HEK293 (cell line): ENCODE measurements at regions of chr14 and their contacts with region 1.

Region 1: GRCh38 chr14:21917699-21918436 is 244.2 kb upstream of the OR4E1 start:
- H3K4me3 ChIP-seq: no peak overlapping the region
- H3K27ac ChIP-seq: no peak overlapping the region
- H3K4me1 ChIP-seq: no peaks in the 10 kb centered on the region
- CTCF ChIP-seq: peak; percentile 52; the same call in 1 of the 2 replicates

Region 2: GRCh38 chr14:21711360-21711961 is 206.4 kb before region 1 on chr14:
- CTCF ChIA-PET with region 1: no interaction called
- POLR2A ChIA-PET with region 1: no interaction called
- H3K4me3 ChIP-seq: no peak overlapping the region
- H3K27ac ChIP-seq: no peak overlapping the region
- H3K4me1 ChIP-seq: no peaks in the 10 kb centered on the region
- CTCF ChIP-seq: no peak

Region 3: DNA sequence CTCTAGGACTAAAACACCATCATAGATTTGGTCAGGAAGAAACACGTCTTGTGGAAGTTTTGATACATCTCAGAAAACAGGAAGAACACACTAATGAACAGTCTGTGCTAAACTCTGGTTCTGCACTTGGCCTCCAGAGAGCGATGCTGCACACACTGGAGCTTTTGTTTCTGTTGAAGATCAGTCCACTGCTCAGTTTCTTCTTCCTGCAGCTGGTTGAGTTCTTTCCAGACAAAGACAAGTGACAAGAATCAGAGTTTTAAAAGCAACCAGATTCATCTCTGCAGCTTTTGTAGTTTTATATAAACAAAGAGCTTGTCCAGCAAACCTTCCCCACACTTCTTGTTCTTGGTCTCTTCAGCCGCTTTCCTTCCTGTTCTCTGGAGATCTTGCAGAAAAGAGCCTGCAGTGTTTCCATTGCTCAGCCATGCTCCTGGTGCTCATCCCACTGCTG is 15.2 kb before region 1 on chr14:
- CTCF ChIA-PET with region 1: interaction called, 28 read pairs
- POLR2A ChIA-PET with region 1: no interaction called
- H3K4me3 ChIP-seq: no peak overlapping the region
- H3K27ac ChIP-seq: no peak overlapping the region
- H3K4me1 ChIP-seq: no peaks in the 10 kb centered on the region
- CTCF ChIP-seq: no peak

Region 4: GRCh38 chr14:21933681-21934080 is 15.8 kb after region 1 on chr14:
- CTCF ChIA-PET with region 1: interaction called, 18 read pairs
- POLR2A ChIA-PET with region 1: no interaction called
- H3K4me3 ChIP-seq: no peak overlapping the region
- H3K27ac ChIP-seq: no peak overlapping the region
- H3K4me1 ChIP-seq: no peaks in the 10 kb centered on the region
- CTCF ChIP-seq: no peak

Region 5: GRCh38 chr14:21940887-21941856 is 23.3 kb after region 1 on chr14:
- CTCF ChIA-PET with region 1: interaction called, 11 read pairs
- POLR2A ChIA-PET with region 1: no interaction called
- H3K4me3 ChIP-seq: no peak overlapping the region
- H3K27ac ChIP-seq: no peak overlapping the region
- H3K4me1 ChIP-seq: no peaks in the 10 kb centered on the region
- CTCF ChIP-seq: no peak

Region 6: GRCh38 chr14:21978184-21978998 is 60.5 kb after region 1 on chr14:
- CTCF ChIA-PET with region 1: interaction called, 12 read pairs
- POLR2A ChIA-PET with region 1: no interaction called
- H3K4me3 ChIP-seq: no peak overlapping the region
- H3K27ac ChIP-seq: no peak overlapping the region
- H3K4me1 ChIP-seq: no peaks in the 10 kb centered on the region
- CTCF ChIP-seq: peak; percentile 54

Region 7: DNA sequence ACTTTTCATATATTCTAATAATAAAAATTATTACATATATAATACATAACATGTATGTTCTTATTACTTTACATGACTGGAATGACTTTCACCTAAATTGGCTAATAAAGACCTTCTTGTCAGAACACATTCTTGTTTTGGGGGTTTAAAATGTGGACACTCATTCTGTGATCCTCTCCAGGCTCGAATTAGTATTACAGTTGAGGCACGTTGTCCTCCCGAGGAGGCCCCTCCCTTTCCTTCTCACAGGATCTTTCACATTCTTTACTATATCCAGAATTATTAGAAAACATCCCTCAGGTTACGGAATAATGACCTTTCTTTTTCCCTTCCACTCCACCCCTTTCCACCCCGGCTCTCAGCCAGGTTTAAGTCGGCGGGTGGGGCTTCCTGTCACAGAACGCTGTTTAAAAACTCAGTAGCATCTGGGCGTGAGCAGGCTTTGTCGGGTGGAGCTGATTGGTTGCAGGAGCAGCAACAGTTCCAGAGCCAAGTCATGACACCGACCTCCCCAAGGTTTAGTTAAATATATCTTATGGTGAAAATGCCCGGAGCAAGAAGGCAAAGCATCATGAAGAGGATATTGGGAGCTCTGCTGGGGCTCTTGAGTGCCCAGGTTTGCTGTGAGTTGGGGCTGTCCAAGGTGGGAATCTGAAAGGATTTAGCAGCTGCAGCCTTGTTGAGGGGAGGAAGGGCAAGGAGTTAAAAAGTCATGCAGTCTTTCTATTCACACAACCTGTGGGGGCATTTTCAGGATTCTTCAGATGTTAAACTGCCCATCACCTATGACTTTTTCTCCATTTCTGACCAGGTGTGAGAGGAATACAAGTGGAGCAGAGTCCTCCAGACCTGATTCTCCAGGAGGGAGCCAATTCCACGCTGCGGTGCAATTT is 152.5 kb after region 1 on chr14:
- CTCF ChIA-PET with region 1: no interaction called
- POLR2A ChIA-PET with region 1: no interaction called
- H3K4me3 ChIP-seq: peak overlapping the region; percentile 2; the same call in 1 of the 2 replicates
- H3K27ac ChIP-seq: no peak overlapping the region
- H3K4me1 ChIP-seq: no peaks in the 10 kb centered on the region
- CTCF ChIP-seq: no peak